PC-3 (cell line): ENCODE measurements at regions of chr9 and their contacts with region 1.

Region 1: DNA sequence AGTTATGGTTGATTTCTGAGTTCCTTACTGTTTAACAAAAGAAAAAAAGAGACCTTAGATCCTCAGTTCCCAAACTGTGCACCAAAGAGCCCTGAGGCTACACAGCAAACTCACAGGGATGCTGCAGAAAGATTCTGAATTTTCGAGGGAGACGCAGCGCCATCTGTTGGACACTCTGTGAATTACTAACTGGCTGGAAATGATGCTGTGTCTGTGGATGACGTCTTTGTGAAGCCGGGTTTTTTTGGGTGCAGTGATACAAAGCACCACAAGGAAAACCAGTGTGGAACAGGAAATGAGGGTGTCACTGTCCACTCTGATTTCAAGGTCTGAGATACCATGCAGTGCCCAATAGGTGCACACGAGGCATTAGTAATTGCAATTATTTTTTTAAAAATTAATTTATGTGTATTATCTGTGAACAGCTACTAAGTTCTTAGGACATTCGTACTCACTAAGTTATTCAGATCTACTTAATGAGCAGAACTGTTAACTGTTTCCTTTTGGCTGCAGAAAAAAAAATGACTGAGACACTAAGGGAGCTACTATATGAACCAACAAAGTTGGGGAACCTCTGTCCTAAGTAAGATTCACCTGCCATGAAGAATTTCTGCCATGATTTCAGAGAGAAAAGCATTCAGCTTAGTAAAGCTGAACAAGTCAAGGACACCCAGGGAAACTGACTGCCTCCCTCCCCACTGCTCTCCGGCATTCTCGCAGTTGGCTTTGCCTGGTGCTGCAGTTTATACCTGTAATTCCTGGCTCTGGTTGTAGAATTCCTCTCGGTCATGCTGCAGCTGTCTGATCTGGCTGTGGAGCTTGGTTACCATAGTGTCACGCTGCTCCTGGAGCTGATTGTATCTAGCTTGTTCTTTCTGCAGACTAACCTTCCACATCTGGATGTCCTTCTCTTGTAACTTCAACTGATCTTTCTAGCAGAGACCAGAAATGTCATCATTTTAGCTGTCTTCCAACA is 23.4 kb downstream of the SPACA9 start:
- DNase-seq: peak; percentile 86
- ATAC-seq: peak; percentile 93
- H3K4me3 ChIP-seq: no peak overlapping the region
- H3K27ac ChIP-seq: no peak overlapping the region
- H3K4me1 ChIP-seq: no peaks in the 10 kb centered on the region
- H3K27me3 ChIP-seq: no peaks in the 10 kb centered on the region
- CTCF ChIP-seq: peak; percentile 88

Region 2: GRCh38 chr9:132507746-132508469 is 394.2 kb before region 1 on chr9:
- CTCF ChIA-PET with region 1: no interaction called
- POLR2A ChIA-PET with region 1: no interaction called
- intact Hi-C with region 1: loop called (anchors 5 kb)
- DNase-seq: peak; percentile 75
- ATAC-seq: peak; percentile 82
- H3K4me3 ChIP-seq: no peak overlapping the region
- H3K27ac ChIP-seq: no peak overlapping the region
- H3K4me1 ChIP-seq: no peaks in the 10 kb centered on the region
- H3K27me3 ChIP-seq: peaks cover 24% of the 10 kb centered on the region
- CTCF ChIP-seq: peak; percentile 81